Breast epithelium (tissue), 4 donors: ENCODE measurements at regions of chr4 and their contacts with region 1.

Region 1: GRCh38 chr4:38967260-38968095 is 64.7 kb downstream of the TMEM156 start:
- DNase-seq: no peak
- H3K4me3 ChIP-seq: no peak overlapping the region
- H3K27ac ChIP-seq: no peak overlapping the region
- H3K4me1 ChIP-seq: no peaks in the 10 kb centered on the region
- H3K27me3 ChIP-seq: no peaks in the 10 kb centered on the region
- CTCF ChIP-seq: no peak
- POLR2A ChIP-seq: no peak

Region 2: GRCh38 chr4:38424151-38424871 is 543.2 kb before region 1 on chr4:
- intact Hi-C with region 1: loop called (anchors 10 kb)
- DNase-seq: no peak
- H3K4me3 ChIP-seq: no peak overlapping the region
- H3K27ac ChIP-seq: no peak overlapping the region
- H3K4me1 ChIP-seq: no peaks in the 10 kb centered on the region
- H3K27me3 ChIP-seq: no peaks in the 10 kb centered on the region
- CTCF ChIP-seq: no peak
- POLR2A ChIP-seq: no peak